K562 (cell line): ENCODE measurements at regions of chr5 and their contacts with region 1.

Region 1: GRCh38 chr5:109688971-109689739 is 572 bp upstream of the MAN2A1 start:
- DNase-seq: peak; percentile 94 to 96 (median 95)
- ATAC-seq: peak; percentile 86
- H3K4me3 ChIP-seq: peak overlapping the region; percentile 91
- H3K27ac ChIP-seq: peak overlapping the region; percentile 92
- H3K4me1 ChIP-seq: peaks cover 14 to 27% of the 10 kb centered on the region in 2 experiments
- H3K27me3 ChIP-seq: no peaks in the 10 kb centered on the region
- CTCF ChIP-seq: peak in 2 of 3 experiments; percentile 17 to 27; a peak in 2 of 6 replicates
- EP300 ChIP-seq: no peak
- POLR2A ChIP-seq: peak; percentile 91
- RAD21 ChIP-seq: no peak; a peak in 2 of 4 replicates

Region 2: GRCh38 chr5:108854886-108855285 is 834.3 kb before region 1 on chr5:
- CTCF ChIA-PET with region 1: no interaction called
- POLR2A ChIA-PET with region 1: no interaction called
- in situ Hi-C with region 1: no loop called
- intact Hi-C with region 1: no loop called
- DNase-seq: no peak
- ATAC-seq: no peak
- H3K4me3 ChIP-seq: no peak overlapping the region
- H3K27ac ChIP-seq: no peak overlapping the region
- H3K4me1 ChIP-seq: no peaks in the 10 kb centered on the region; a peak in 1 of 5 replicates
- H3K27me3 ChIP-seq: no peaks in the 10 kb centered on the region
- CTCF ChIP-seq: no peak
- EP300 ChIP-seq: no peak
- POLR2A ChIP-seq: no peak
- RAD21 ChIP-seq: no peak

Region 3: DNA sequence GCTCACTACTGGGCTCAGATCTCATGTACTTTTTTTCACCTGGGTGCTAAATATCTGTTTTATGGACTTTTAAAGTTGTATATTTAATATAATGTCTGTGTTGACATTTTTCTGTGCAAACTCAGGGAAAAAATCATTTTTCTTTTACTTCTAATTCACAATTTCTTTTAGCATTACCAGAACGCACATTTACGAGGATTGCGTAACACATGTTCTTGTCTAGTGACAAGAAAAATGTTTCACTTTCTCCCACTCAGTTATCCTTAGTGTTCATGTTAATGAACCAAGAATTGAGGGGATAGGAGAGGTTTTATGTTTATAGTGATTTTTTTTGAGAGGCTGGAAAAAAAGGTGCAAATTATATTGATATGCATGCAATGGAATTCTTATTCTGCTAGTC is 193.0 kb before region 1 on chr5:
- CTCF ChIA-PET with region 1: no interaction called
- POLR2A ChIA-PET with region 1: no interaction called
- in situ Hi-C with region 1: no loop called
- intact Hi-C with region 1: loop called (anchors 10 kb)
- DNase-seq: no peak
- ATAC-seq: no peak
- H3K4me3 ChIP-seq: no peak overlapping the region
- H3K27ac ChIP-seq: no peak overlapping the region
- H3K4me1 ChIP-seq: no peaks in the 10 kb centered on the region
- H3K27me3 ChIP-seq: peaks cover 2 to 9% of the 10 kb centered on the region in 2 experiments; a peak in 2 of 5 replicates
- CTCF ChIP-seq: no peak
- EP300 ChIP-seq: no peak
- POLR2A ChIP-seq: no peak
- RAD21 ChIP-seq: no peak

Region 4: GRCh38 chr5:109604758-109605157 is 84.4 kb before region 1 on chr5:
- CTCF ChIA-PET with region 1: no interaction called
- POLR2A ChIA-PET with region 1: no interaction called
- in situ Hi-C with region 1: loop called (anchors 5 kb)
- intact Hi-C with region 1: no loop called
- DNase-seq: no peak
- ATAC-seq: no peak
- H3K4me3 ChIP-seq: no peak overlapping the region
- H3K27ac ChIP-seq: no peak overlapping the region
- H3K4me1 ChIP-seq: no peaks in the 10 kb centered on the region
- H3K27me3 ChIP-seq: peaks cover 3 to 7% of the 10 kb centered on the region in 2 experiments; a peak in 2 of 5 replicates
- CTCF ChIP-seq: no peak
- EP300 ChIP-seq: no peak
- POLR2A ChIP-seq: no peak
- RAD21 ChIP-seq: no peak

Region 5: GRCh38 chr5:109844148-109844547 is 155.0 kb after region 1 on chr5:
- CTCF ChIA-PET with region 1: no interaction called
- POLR2A ChIA-PET with region 1: interaction called, 3 read pairs
- in situ Hi-C with region 1: no loop called
- intact Hi-C with region 1: loop called (anchors 2 kb)
- DNase-seq: peak in 2 of 4 experiments; percentile 12 to 18
- ATAC-seq: peak; percentile 56; the same call in 1 of the 3 replicates
- H3K4me3 ChIP-seq: no peak overlapping the region
- H3K27ac ChIP-seq: no peak overlapping the region
- H3K4me1 ChIP-seq: no peaks in the 10 kb centered on the region
- H3K27me3 ChIP-seq: no peaks in the 10 kb centered on the region
- CTCF ChIP-seq: peak in 2 of 3 experiments; percentile 26 to 38; a peak in 2 of 6 replicates
- EP300 ChIP-seq: no peak
- POLR2A ChIP-seq: no peak
- RAD21 ChIP-seq: peak; percentile 16 to 51; a peak in 2 of 4 replicates